ENCODE measurements at regions of chr1 and their contacts with region 1.

Region 1: GRCh38 chr1:48066936-48067335 is 69.8 kb upstream of the TRABD2B start:
- DNase-seq: peak in 1 of 2 donors; percentile 53
- H3K4me3 ChIP-seq: no peak overlapping the region
- H3K27ac ChIP-seq: no peak overlapping the region
- H3K4me1 ChIP-seq: peaks cover 0 to 15% of the 10 kb centered on the region in 2 donors
- H3K27me3 ChIP-seq: no peaks in the 10 kb centered on the region
- CTCF ChIP-seq: no peak

Region 2: GRCh38 chr1:48048064-48048463 is 18.9 kb before region 1 on chr1:
- intact Hi-C with region 1: loop called (anchors 2 kb)
- DNase-seq: peak; percentile 16 to 72
- H3K4me3 ChIP-seq: no peak overlapping the region
- H3K27ac ChIP-seq: peak overlapping the region; percentile 82 to 88
- H3K4me1 ChIP-seq: peaks cover 15 to 32% of the 10 kb centered on the region in 2 donors
- H3K27me3 ChIP-seq: no peaks in the 10 kb centered on the region
- CTCF ChIP-seq: no peak

Region 3: DNA sequence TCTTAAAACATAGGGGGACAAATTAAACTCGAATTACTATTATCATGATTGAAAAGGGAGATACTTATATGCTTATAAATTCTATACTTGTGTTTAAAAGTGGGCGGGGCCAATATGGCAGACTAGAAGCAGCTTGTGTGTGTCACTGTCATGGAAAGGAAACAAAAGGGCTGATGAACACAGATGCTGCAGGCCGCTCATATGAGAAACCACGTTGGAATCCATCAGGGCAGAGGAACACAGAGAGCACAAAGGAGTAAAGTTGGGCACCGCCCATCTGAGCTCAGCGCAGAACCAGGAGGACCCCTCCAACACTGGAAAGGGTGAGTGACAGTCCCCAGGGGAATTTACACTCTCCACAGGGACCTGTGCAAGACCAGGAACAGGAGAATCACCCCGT is 262.6 kb after region 1 on chr1:
- intact Hi-C with region 1: no loop called
- DNase-seq: no peak
- H3K4me3 ChIP-seq: no peak overlapping the region
- H3K27ac ChIP-seq: no peak overlapping the region
- H3K4me1 ChIP-seq: no peaks in the 10 kb centered on the region
- H3K27me3 ChIP-seq: no peaks in the 10 kb centered on the region
- CTCF ChIP-seq: no peak